Activated naive CD4-positive, alpha-beta T cell treated with anti-CD3 and anti-CD28 coated beads, Interleukin-2, amount 10 ng/mL, durations not matched to agents 7 days and 5 days (primary cell): ENCODE measurements at regions of chr18 and their contacts with region 1.

Region 1: DNA sequence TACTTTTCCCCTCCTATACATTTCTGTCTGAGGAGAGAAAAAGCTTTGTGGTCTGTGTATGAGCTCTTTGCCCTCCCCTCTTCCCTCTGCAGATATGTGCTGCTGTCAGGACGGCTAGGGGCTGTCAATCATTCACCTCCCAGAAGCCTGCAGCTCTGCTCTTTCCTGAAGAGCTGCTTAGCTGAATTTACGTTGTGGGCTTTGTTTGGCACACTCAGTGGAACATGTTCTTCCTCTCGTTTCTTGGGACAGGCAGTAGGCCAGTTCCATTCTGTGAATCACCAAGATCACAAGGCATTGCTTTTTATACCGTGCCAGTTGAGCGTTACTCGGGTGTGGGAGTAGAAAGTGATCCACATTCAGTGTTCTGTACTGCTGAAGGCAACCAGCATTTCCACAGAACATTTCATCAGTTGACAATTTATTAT is 136.7 kb downstream of the LAMA3 start:
- DNase-seq: no peak
- H3K4me3 Mint-ChIP-seq: no peak overlapping the region
- H3K27ac Mint-ChIP-seq: no peak overlapping the region
- H3K4me1 Mint-ChIP-seq: peaks cover 34% of the 10 kb centered on the region
- H3K27me3 Mint-ChIP-seq: peaks cover 12% of the 10 kb centered on the region

Region 2: DNA sequence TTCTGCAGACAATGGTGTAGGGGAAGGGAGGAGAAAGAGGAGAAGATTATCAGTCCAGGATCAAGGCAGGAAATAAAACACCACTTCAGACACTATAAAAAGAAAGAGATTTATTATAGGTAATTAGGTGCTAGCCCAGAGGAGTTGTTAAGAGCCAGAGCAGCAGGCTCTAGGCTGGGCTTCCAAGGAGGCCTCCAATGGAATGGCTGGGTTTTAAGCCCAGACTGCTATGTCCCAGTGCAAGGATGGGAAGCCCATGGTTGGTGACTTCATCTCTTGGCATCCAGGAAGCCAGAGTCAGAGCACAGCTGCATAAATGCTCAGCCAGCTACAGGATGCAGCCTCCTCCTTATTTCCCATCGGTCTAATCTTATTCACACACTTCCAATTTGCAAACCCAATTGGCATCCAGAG is 41.2 kb before region 1 on chr18:
- CTCF ChIA-PET with region 1: no interaction called
- DNase-seq: no peak
- H3K4me3 Mint-ChIP-seq: no peak overlapping the region
- H3K27ac Mint-ChIP-seq: no peak overlapping the region
- H3K4me1 Mint-ChIP-seq: no peaks in the 10 kb centered on the region
- H3K27me3 Mint-ChIP-seq: peaks cover 33% of the 10 kb centered on the region

Region 3: DNA sequence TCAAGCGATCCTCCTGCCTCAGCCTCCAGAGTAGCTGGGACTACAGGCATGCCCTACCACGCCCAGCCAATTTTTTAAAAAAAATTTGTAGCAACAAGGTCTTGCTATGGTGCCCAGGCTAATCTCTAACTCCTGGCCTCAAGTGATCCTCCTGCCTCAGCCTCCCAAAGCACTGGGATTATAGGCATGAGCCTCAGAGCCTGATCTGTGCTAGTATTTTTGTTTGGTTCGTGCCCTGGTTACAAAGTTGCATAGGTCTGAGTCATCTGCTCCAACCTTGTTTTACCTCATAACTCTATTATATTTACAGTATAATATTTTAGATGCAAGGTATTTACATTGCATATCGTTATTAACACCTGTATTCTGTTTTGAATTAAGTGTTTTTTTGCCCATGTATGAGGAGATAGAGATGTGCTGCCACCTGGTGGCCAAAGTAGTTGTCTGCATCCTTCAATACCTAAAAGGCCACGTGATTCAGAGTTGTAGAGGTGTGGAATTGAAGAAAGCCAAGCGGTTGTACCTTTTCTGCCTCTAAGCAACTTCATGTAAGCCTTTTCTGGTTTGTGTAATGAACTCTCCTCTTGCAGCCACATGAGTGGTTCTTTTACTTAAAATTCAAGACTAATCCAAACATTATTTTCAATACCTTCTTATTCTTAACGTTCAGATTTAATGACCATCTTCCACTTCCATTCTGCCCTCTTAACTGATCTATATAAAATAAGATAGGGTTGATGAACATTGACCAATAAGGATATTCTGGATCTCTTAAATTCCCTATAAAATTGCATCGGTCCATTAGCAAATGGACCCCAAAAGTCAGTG is 293.0 kb after region 1 on chr18:
- CTCF ChIA-PET with region 1: interaction called, 12 read pairs
- DNase-seq: peak; percentile 85
- H3K4me3 Mint-ChIP-seq: no peak overlapping the region
- H3K27ac Mint-ChIP-seq: no peak overlapping the region
- H3K4me1 Mint-ChIP-seq: peaks cover 22% of the 10 kb centered on the region
- H3K27me3 Mint-ChIP-seq: no peaks in the 10 kb centered on the region